K562 (cell line): ENCODE measurements at regions of chr1 and their contacts with region 1.

Region 1: GRCh38 chr1:37914719-37915475 is 32.0 kb downstream of the INPP5B start:
- DNase-seq: no peak
- ATAC-seq: peak; percentile 39
- H3K4me3 ChIP-seq: no peak overlapping the region
- H3K27ac ChIP-seq: peak overlapping the region; percentile 9; the same call in 1 of the 3 replicates
- H3K4me1 ChIP-seq: peaks cover 11 to 23% of the 10 kb centered on the region in 2 experiments; a peak in 4 of 5 replicates
- H3K27me3 ChIP-seq: no peaks in the 10 kb centered on the region
- CTCF ChIP-seq: no peak
- EP300 ChIP-seq: no peak
- POLR2A ChIP-seq: no peak
- RAD21 ChIP-seq: no peak

Region 2: DNA sequence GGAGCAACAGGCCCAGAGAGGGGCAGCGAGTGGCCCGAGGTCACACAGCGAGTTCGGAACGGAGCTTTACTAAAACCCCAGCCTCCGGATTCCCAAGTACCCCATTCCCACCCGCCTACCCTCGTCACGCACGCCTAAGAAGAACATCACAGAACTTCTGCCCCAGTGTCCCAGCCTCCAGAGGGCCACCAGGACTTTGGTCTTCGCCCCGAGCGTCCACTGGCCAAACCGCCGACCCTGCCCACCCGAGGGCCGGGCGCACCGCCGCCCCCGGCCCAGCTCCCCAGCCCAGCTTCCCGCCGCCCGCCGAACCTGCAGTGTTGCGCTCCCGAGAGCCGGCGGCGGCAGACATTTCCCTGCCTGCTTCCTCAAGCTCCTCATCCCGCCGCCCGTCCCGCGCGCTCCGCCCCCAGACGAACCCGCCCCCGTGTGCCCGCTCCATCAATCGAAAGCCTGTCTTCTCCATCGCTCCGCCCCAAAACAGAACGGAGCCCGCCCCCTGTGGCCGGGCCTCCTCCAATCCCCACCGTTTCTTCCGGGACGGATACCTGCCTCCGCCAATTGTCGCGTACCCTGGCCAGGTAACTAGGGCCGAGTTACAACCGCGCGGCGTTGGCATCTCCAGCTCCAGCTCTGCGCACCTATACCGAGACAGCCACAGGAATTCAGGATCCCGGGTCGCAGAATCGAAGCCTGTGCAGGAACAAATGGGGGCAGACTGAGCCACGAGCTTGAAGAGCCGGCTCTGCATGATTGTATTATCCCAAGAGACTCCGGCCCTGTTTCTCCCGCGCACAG is 16.7 kb after region 1 on chr1:
- CTCF ChIA-PET with region 1: no interaction called
- POLR2A ChIA-PET with region 1: interaction called, 11 read pairs
- in situ Hi-C with region 1: no loop called
- intact Hi-C with region 1: no loop called
- DNase-seq: peak; percentile 98 to 100 (median 98)
- ATAC-seq: peak; percentile 98
- H3K4me3 ChIP-seq: peak overlapping the region; percentile 82
- H3K27ac ChIP-seq: peak overlapping the region; percentile 80
- H3K4me1 ChIP-seq: peaks cover 28 to 32% of the 10 kb centered on the region in 2 experiments; a peak in 4 of 5 replicates
- H3K27me3 ChIP-seq: no peaks in the 10 kb centered on the region
- CTCF ChIP-seq: 0 out of 6 replicates have a peak, but pooled peaks of 1 of the 3 experiments have one; percentile 5
- EP300 ChIP-seq: 0 out of 2 replicates have a peak, but pooled peaks have one; percentile 14
- POLR2A ChIP-seq: peak; percentile 78
- RAD21 ChIP-seq: peak in 1 of 2 experiments; percentile 11; a peak in 1 of 4 replicates

Region 3: GRCh38 chr1:37946703-37947360 is 31.9 kb after region 1 on chr1 and contains the start of gene INPP5B:
- CTCF ChIA-PET with region 1: no interaction called
- POLR2A ChIA-PET with region 1: no interaction called
- in situ Hi-C with region 1: no loop called
- intact Hi-C with region 1: no loop called
- DNase-seq: peak; percentile 90 to 97 (median 94)
- ATAC-seq: peak; percentile 97
- H3K4me3 ChIP-seq: peak within 1 kb of the TSS; percentile 61
- H3K27ac ChIP-seq: peak within 1 kb of the TSS; percentile 89
- H3K4me1 ChIP-seq: peaks cover 15 to 29% of the 10 kb centered on the region in 2 experiments; a peak in 4 of 5 replicates
- H3K27me3 ChIP-seq: no peaks in the 10 kb centered on the region
- CTCF ChIP-seq: 0 out of 6 replicates have a peak, but pooled peaks of 1 of the 3 experiments have one; percentile 7
- EP300 ChIP-seq: no peak
- POLR2A ChIP-seq: peak; percentile 70
- RAD21 ChIP-seq: no peak
- polyA plus RNA-seq, gene INPP5B: 14.1 to 16.5 TPM

Region 4: DNA sequence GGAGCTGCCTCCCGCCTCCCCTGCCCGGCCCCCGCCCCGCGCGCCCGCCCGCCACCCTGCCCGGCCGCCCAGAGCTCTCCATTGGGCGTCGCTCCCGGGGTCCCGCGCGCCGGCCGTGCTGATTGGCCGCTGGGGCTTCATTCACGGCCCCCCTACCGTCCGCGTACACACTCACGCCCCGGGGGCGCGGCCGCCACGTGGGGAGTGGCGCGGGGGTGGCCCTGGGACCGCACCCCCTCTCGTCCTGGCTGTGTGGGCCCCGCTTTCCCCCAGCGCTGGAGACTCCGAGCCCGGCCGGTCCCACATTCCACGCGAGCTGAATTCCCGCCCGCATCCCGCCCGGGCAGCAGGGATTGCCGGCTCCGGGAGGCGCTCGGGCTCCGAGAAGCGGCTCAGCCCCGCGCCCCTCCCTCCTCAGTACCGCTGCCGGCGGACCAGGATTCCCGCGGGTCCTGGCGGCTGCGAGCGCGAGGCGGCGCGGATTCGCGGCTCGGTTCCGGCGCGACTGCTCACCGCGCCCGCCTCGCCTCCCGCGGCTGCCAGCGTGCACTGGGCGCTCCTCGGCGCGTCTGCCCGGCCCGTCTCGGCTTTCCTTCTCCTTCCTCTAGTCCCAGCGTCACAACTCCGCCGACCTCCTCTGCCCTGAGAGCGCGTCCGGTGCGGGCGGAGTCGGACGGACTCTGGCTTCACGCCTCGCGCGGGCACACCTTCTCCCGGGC is 132.1 kb after region 1 on chr1:
- CTCF ChIA-PET with region 1: no interaction called
- POLR2A ChIA-PET with region 1: no interaction called
- in situ Hi-C with region 1: no loop called
- intact Hi-C with region 1: no loop called
- DNase-seq: peak; percentile 90 to 99 (median 98)
- ATAC-seq: peak; percentile 95
- H3K4me3 ChIP-seq: peak overlapping the region; percentile 49
- H3K27ac ChIP-seq: no peak overlapping the region
- H3K4me1 ChIP-seq: peaks cover 0 to 35% of the 10 kb centered on the region in 2 experiments; a peak in 3 of 5 replicates
- H3K27me3 ChIP-seq: peaks cover 24 to 48% of the 10 kb centered on the region in 2 experiments; a peak in 4 of 5 replicates
- CTCF ChIP-seq: no peak
- EP300 ChIP-seq: no peak
- POLR2A ChIP-seq: no peak
- RAD21 ChIP-seq: peak in 1 of 2 experiments; percentile 32; a peak in 1 of 4 replicates

Region 5: GRCh38 chr1:38071312-38072256 is 156.7 kb after region 1 on chr1:
- CTCF ChIA-PET with region 1: no interaction called
- POLR2A ChIA-PET with region 1: no interaction called
- in situ Hi-C with region 1: no loop called
- intact Hi-C with region 1: no loop called
- DNase-seq: peak; percentile 37 to 64 (median 46)
- ATAC-seq: peak; percentile 90
- H3K4me3 ChIP-seq: no peak overlapping the region
- H3K27ac ChIP-seq: no peak overlapping the region
- H3K4me1 ChIP-seq: peaks cover 0 to 11% of the 10 kb centered on the region in 2 experiments; a peak in 2 of 5 replicates
- H3K27me3 ChIP-seq: peaks cover 14 to 58% of the 10 kb centered on the region in 2 experiments; a peak in 4 of 5 replicates
- CTCF ChIP-seq: peak; percentile 57 to 79 (median 71)
- EP300 ChIP-seq: no peak
- POLR2A ChIP-seq: no peak
- RAD21 ChIP-seq: peak; percentile 31 to 72